ENCODE measurements at regions of chr12 and their contacts with region 1.

Region 1: DNA sequence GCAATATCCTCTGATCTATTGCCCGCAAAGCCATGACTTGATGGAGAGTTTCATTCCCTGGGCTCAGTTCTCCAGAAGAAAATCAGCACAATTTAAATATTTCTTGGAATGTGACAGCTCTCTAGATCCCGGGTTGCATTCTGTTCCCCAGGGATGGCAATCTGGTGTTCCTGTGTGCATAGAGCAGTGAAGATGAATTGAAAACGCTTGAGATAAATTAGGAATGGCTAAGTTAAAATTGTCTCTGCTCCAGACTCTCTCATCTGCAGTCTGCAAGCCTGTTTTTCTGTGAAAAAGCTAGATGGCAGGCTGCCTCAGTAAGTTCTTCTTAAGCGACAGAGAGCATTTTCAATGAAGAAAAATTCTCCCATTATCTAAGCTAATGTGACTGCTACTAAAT is 582.5 kb upstream of the MGAT4C start:
- DNase-seq: no peak
- ATAC-seq: no peak
- H3K4me3 ChIP-seq: no peak overlapping the region
- H3K4me3 Mint-ChIP-seq: no peak overlapping the region
- H3K27ac ChIP-seq: no peak overlapping the region
- H3K27ac Mint-ChIP-seq: no peak overlapping the region
- H3K4me1 ChIP-seq: no peaks in the 10 kb centered on the region
- H3K4me1 Mint-ChIP-seq: no peaks in the 10 kb centered on the region
- H3K27me3 ChIP-seq: no peaks in the 10 kb centered on the region
- H3K27me3 Mint-ChIP-seq: no peaks in the 10 kb centered on the region
- CTCF ChIP-seq: no peak

Region 2: DNA sequence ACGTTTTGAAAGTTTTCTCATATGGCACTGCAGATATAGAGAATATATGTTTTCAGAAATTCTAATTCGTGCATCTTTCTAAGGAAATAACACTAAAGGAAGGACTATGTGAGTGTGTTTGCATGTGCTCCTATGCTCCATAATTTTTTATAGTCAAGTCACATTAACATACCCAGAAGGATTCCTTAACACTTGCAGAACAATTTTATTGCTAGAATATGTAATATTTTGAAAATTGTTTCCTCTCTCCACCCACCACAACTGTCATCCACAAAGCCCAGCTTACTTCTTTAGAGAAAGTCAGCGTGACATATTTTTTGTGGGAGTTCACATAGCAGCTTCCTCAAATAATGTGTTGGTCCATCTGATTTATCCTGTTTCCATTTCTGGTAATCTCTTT is 22.1 kb after region 1 on chr12:
- CTCF ChIA-PET with region 1: no interaction called
- POLR2A ChIA-PET with region 1: no interaction called
- intact Hi-C with region 1: loop called in 1 of 2 experiments (anchors 1 kb)
- DNase-seq: no peak
- ATAC-seq: no peak
- H3K4me3 ChIP-seq: no peak overlapping the region
- H3K4me3 Mint-ChIP-seq: no peak overlapping the region
- H3K27ac ChIP-seq: no peak overlapping the region
- H3K27ac Mint-ChIP-seq: no peak overlapping the region
- H3K4me1 ChIP-seq: no peaks in the 10 kb centered on the region
- H3K4me1 Mint-ChIP-seq: no peaks in the 10 kb centered on the region
- H3K27me3 ChIP-seq: no peaks in the 10 kb centered on the region
- H3K27me3 Mint-ChIP-seq: no peaks in the 10 kb centered on the region
- CTCF ChIP-seq: no peak

Measured in CD8-positive, alpha-beta T cell (primary cell).